Dorsolateral prefrontal cortex (tissue), 120 donors: ENCODE measurements at regions of chr9 and their contacts with region 1.

Region 1: DNA sequence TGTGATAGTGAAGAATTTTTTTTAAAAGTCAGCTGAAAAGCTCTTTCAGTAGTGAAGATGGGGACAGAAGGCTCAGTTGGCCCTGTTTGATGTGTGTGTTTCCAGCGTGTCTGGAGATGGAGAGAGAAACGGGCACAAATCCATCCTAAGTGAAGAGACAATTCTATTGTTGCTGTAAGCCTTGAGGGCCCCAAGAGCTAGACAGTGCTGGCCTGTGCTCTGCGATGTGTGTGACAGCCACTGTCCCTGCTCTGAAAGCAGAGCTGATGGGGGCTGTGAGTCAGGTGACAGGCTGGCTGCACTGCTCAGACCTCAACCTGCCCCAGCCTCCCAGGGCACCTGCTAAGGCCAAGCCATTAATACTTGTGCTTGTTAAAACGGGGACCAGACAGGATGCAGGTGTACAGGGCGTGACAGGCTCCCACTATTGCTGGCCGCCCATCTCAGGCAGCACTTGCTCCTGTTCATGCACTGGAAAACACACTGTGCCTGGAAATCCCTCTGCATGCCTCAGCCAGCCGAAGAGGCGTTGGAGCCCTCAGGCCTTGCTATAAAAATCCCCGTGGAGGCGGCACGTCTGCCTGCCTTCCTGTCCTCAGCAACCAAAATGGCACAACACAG is 44.6 kb upstream of the SEMA4D start:
- DNase-seq: peak; percentile 9 to 88 (median 80)
- H3K4me3 ChIP-seq: peak overlapping the region in 13 of 59 donors; percentile 2 to 46 (median 13)
- H3K27ac ChIP-seq: peak overlapping the region; percentile 58 to 98 (median 92)
- H3K27me3 ChIP-seq: no peaks in the 10 kb centered on the region
- CTCF ChIP-seq: peak in 4 of 56 donors; percentile 1 to 33 (median 12)

Region 2: GRCh38 chr9:89437000-89437631 is 105.4 kb before region 1 on chr9:
- intact Hi-C with region 1: loop called in 1 of 2 experiments (anchors 5 kb)
- DNase-seq: no peak
- H3K4me3 ChIP-seq: peak overlapping the region in 6 of 59 donors; percentile 0 to 64 (median 34)
- H3K27ac ChIP-seq: peak overlapping the region; percentile 62 to 100 (median 92)
- H3K27me3 ChIP-seq: no peaks in the 10 kb centered on the region
- CTCF ChIP-seq: no peak

Region 3: GRCh38 chr9:89448381-89448780 is 94.1 kb before region 1 on chr9:
- intact Hi-C with region 1: loop called in 1 of 2 experiments (anchors 1 kb)
- DNase-seq: peak; percentile 20 to 95 (median 90)
- H3K4me3 ChIP-seq: peak overlapping the region in 7 of 59 donors; percentile 3 to 31 (median 11)
- H3K27ac ChIP-seq: peak overlapping the region; percentile 82 to 100 (median 96)
- H3K27me3 ChIP-seq: no peaks in the 10 kb centered on the region
- CTCF ChIP-seq: peak in 8 of 56 donors; percentile 8 to 27 (median 14)

Region 4: GRCh38 chr9:89461265-89461664 is 81.2 kb before region 1 on chr9:
- intact Hi-C with region 1: loop called in 1 of 2 experiments (anchors 5 kb)
- DNase-seq: peak in 3 of 10 donors; percentile 35 to 81 (median 54)
- H3K4me3 ChIP-seq: no peak overlapping the region
- H3K27ac ChIP-seq: peak overlapping the region in 52 of 59 donors; percentile 2 to 100 (median 80)
- H3K27me3 ChIP-seq: no peaks in the 10 kb centered on the region
- CTCF ChIP-seq: no peak

Region 5: DNA sequence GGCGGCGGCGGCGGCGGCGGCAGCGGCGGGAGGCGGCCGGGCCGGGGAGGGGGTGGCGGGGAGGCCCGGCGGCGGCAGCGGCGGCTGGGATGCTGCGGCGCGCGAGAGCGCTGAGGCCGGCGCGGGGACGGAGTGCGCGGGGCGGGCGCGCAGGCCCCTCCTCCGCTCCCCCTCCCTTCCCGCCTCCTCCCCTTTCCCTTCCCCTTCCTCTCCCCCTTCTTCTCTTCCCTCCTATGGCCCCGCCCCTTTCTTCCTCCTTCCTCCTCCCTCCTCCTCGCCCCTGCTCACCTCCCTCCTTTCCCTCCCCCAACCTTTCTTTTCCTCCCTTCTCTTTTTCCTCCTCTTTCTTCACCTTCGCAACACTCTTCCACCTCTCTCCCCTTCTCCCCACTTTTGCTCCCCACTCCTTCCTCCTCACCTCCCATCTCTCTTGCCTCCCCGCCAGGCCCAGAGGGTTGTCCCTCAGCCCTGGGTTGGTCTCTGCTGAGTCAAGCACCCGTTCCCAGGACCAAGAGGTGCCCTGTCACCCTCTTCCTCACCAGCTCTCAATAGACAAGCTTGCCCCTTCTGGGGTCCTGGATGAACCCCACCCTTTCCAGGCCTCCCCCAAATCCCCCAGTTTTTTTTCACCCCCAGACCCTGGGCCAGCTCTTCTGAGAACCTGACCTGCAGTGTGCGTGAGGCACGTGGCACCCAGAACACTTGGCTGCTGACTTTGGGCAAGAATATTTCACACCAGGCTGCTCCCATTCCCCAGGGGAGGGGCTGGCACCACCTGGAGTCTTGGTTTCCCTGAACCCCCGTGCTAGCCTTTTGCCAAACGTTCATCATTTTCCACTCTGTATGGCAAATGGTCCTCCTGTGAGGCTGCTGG is 44.3 kb before region 1 on chr9 and contains the start of gene SEMA4D:
- intact Hi-C with region 1: loop called (anchors 2 to 5 kb)
- DNase-seq: peak; percentile 54 to 88 (median 69)
- H3K4me3 ChIP-seq: peak within 1 kb of the TSS; percentile 52 to 87 (median 76)
- H3K27ac ChIP-seq: peak within 1 kb of the TSS; percentile 63 to 96 (median 90)
- H3K27me3 ChIP-seq: no peaks in the 10 kb centered on the region
- CTCF ChIP-seq: no peak
- total RNA-seq, gene SEMA4D: 90.5 to 697 (median 192) TPM

Region 6: GRCh38 chr9:89755821-89756220 is 213.3 kb after region 1 on chr9:
- intact Hi-C with region 1: no loop called
- DNase-seq: no peak
- H3K4me3 ChIP-seq: no peak overlapping the region
- H3K27ac ChIP-seq: no peak overlapping the region
- H3K27me3 ChIP-seq: peaks cover 0 to 2% (median 0%) of the 10 kb centered on the region in 45 donors
- CTCF ChIP-seq: no peak